Calu3 (cell line): ENCODE measurements at regions of chr7 and their contacts with region 1.

Region 1: GRCh38 chr7:19665399-19666008 is 43.3 kb downstream of the POLR1F start:
- DNase-seq: no peak
- H3K4me3 Mint-ChIP-seq: no peak overlapping the region
- H3K27ac Mint-ChIP-seq: no peak overlapping the region
- H3K4me1 Mint-ChIP-seq: peaks cover 20% of the 10 kb centered on the region
- H3K27me3 Mint-ChIP-seq: no peaks in the 10 kb centered on the region
- CTCF ChIP-seq: peak; percentile 53

Region 2: GRCh38 chr7:18590744-18591340 is 1074.7 kb before region 1 on chr7:
- CTCF ChIA-PET with region 1: no interaction called
- intact Hi-C with region 1: loop called (anchors 2 kb)
- DNase-seq: no peak
- H3K4me3 Mint-ChIP-seq: no peak overlapping the region
- H3K27ac Mint-ChIP-seq: no peak overlapping the region
- H3K4me1 Mint-ChIP-seq: no peaks in the 10 kb centered on the region
- H3K27me3 Mint-ChIP-seq: no peaks in the 10 kb centered on the region
- CTCF ChIP-seq: peak; percentile 34

Region 3: GRCh38 chr7:18693406-18693805 is 972.1 kb before region 1 on chr7:
- CTCF ChIA-PET with region 1: no interaction called
- intact Hi-C with region 1: loop called (anchors 5 kb)
- DNase-seq: peak; percentile 16
- H3K4me3 Mint-ChIP-seq: no peak overlapping the region
- H3K27ac Mint-ChIP-seq: no peak overlapping the region
- H3K4me1 Mint-ChIP-seq: no peaks in the 10 kb centered on the region
- H3K27me3 Mint-ChIP-seq: no peaks in the 10 kb centered on the region
- CTCF ChIP-seq: peak; percentile 36

Region 4: DNA sequence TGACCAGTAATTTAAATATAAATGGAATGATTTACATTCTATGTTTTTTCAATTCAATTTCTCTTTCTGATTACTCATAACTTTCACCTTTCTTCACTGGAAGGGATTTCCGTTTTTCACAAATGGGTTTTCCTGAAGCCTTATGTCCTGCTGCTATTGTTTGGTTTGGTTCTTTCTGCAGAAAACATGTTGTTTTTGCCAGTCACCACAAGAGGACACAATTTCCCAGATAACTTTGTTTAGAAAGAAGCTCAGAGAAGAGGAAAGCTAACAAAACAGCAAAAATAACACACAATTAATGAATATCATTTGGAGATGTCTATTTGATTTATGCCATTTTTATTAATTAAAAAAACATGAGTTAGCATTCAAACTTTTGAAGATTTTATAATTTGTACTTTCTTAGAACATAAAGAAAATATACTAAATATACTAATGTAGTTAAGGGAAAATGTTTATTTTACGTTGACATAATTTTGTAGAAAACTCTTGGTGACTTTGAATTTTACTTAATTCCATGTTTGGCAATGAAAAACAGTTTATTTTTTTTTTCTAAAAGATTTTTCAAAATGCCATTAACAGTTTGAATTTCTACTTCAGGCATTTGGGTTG is 543.4 kb before region 1 on chr7:
- CTCF ChIA-PET with region 1: interaction called, 4 read pairs
- intact Hi-C with region 1: loop called (anchors 1 kb)
- DNase-seq: no peak
- H3K4me3 Mint-ChIP-seq: no peak overlapping the region
- H3K27ac Mint-ChIP-seq: no peak overlapping the region
- H3K4me1 Mint-ChIP-seq: no peaks in the 10 kb centered on the region
- H3K27me3 Mint-ChIP-seq: peaks cover 57% of the 10 kb centered on the region
- CTCF ChIP-seq: peak; percentile 60

Region 5: DNA sequence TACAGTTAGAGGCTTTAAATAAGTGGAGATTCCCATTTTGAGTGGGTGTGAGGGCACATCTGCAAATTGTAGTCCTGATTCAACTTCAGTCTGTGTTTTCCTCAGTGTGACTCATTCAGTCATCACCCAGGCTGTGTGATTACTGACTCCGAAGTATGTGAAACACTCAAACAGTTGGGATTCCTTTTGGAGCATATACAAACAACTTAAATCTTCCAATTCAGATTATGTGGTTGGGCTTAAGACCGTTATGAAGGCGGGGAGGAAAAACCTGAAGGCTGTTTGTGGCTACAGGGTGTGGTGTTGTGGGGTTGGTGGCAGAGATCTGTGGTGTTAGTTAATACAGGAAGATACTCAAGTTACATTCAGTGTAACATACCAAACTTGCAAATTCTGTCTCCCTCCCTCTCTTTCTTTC is 260.6 kb before region 1 on chr7:
- CTCF ChIA-PET with region 1: no interaction called
- intact Hi-C with region 1: loop called (anchors 5 kb)
- DNase-seq: peak; percentile 40
- H3K4me3 Mint-ChIP-seq: no peak overlapping the region
- H3K27ac Mint-ChIP-seq: no peak overlapping the region
- H3K4me1 Mint-ChIP-seq: peaks cover 18% of the 10 kb centered on the region
- H3K27me3 Mint-ChIP-seq: peaks cover 12% of the 10 kb centered on the region
- CTCF ChIP-seq: no peak

Region 6: GRCh38 chr7:19491821-19492452 is 173.6 kb before region 1 on chr7:
- CTCF ChIA-PET with region 1: no interaction called
- intact Hi-C with region 1: loop called (anchors 10 kb)
- DNase-seq: peak; percentile 39
- H3K4me3 Mint-ChIP-seq: no peak overlapping the region
- H3K27ac Mint-ChIP-seq: no peak overlapping the region
- H3K4me1 Mint-ChIP-seq: no peaks in the 10 kb centered on the region
- H3K27me3 Mint-ChIP-seq: no peaks in the 10 kb centered on the region
- CTCF ChIP-seq: peak; percentile 61

Region 7: GRCh38 chr7:19560111-19560883 is 105.2 kb before region 1 on chr7:
- CTCF ChIA-PET with region 1: no interaction called
- intact Hi-C with region 1: loop called (anchors 5 kb)
- DNase-seq: no peak
- H3K4me3 Mint-ChIP-seq: no peak overlapping the region
- H3K27ac Mint-ChIP-seq: no peak overlapping the region
- H3K4me1 Mint-ChIP-seq: no peaks in the 10 kb centered on the region
- H3K27me3 Mint-ChIP-seq: no peaks in the 10 kb centered on the region
- CTCF ChIP-seq: no peak